B cell (primary cell): ENCODE measurements at regions of chr17 and their contacts with region 1.

Region 1: GRCh38 chr17:32877164-32877764 is 340 bp upstream of the MYO1D start:
- DNase-seq: peak; percentile 96
- ATAC-seq: peak; percentile 94
- H3K4me3 ChIP-seq: peak overlapping the region in 4 of 5 experiments; percentile 36 to 85 (median 75)
- H3K4me3 Mint-ChIP-seq: peak overlapping the region; percentile 85
- H3K27ac ChIP-seq: peak overlapping the region; percentile 70 to 77
- H3K27ac Mint-ChIP-seq: peak overlapping the region; percentile 90
- H3K4me1 ChIP-seq: peaks cover 12 to 19% of the 10 kb centered on the region in 2 donors
- H3K4me1 Mint-ChIP-seq: peaks cover 20% of the 10 kb centered on the region
- H3K27me3 ChIP-seq: no peaks in the 10 kb centered on the region
- H3K27me3 Mint-ChIP-seq: peaks cover 4% of the 10 kb centered on the region
- CTCF ChIP-seq: peak; percentile 77

Region 2: GRCh38 chr17:32444308-32445073 is 432.8 kb before region 1 on chr17 and contains the start of gene PSMD11:
- CTCF ChIA-PET with region 1: interaction called, 3 read pairs
- POLR2A ChIA-PET with region 1: no interaction called
- intact Hi-C with region 1: loop called (anchors 5 kb)
- DNase-seq: peak; percentile 98
- ATAC-seq: peak; percentile 98
- H3K4me3 ChIP-seq: peak within 1 kb of the TSS; percentile 78 to 96 (median 95)
- H3K4me3 Mint-ChIP-seq: peak within 1 kb of the TSS; percentile 86
- H3K27ac ChIP-seq: peak within 1 kb of the TSS; percentile 48 to 89
- H3K27ac Mint-ChIP-seq: peak within 1 kb of the TSS; percentile 90
- H3K4me1 ChIP-seq: peaks cover 18 to 23% of the 10 kb centered on the region in 2 donors
- H3K4me1 Mint-ChIP-seq: peaks cover 34% of the 10 kb centered on the region
- H3K27me3 ChIP-seq: peaks cover 0 to 2% (median under 1%) of the 10 kb centered on the region in 4 experiments
- H3K27me3 Mint-ChIP-seq: no peaks in the 10 kb centered on the region
- CTCF ChIP-seq: peak; percentile 46
- total RNA-seq, gene PSMD11: 73.4 and 78.7 TPM in 2 replicates

Region 3: GRCh38 chr17:32828822-32829221 is 48.4 kb before region 1 on chr17:
- CTCF ChIA-PET with region 1: interaction called, 33 read pairs
- POLR2A ChIA-PET with region 1: interaction called, 4 read pairs
- intact Hi-C with region 1: loop called (anchors 1 kb)
- DNase-seq: no peak
- ATAC-seq: no peak
- H3K4me3 ChIP-seq: no peak overlapping the region
- H3K4me3 Mint-ChIP-seq: peak overlapping the region; percentile 65
- H3K27ac ChIP-seq: peak overlapping the region in 1 of 2 donors; percentile 54
- H3K27ac Mint-ChIP-seq: peak overlapping the region; percentile 72
- H3K4me1 ChIP-seq: peaks cover 15 to 27% of the 10 kb centered on the region in 2 donors
- H3K4me1 Mint-ChIP-seq: peaks cover 44% of the 10 kb centered on the region
- H3K27me3 ChIP-seq: no peaks in the 10 kb centered on the region
- H3K27me3 Mint-ChIP-seq: no peaks in the 10 kb centered on the region
- CTCF ChIP-seq: no peak

Region 4: GRCh38 chr17:32896647-32897258 is 19.5 kb after region 1 on chr17:
- CTCF ChIA-PET with region 1: interaction called, 10 read pairs
- POLR2A ChIA-PET with region 1: no interaction called
- intact Hi-C with region 1: no loop called
- DNase-seq: no peak
- ATAC-seq: no peak
- H3K4me3 ChIP-seq: no peak overlapping the region
- H3K4me3 Mint-ChIP-seq: no peak overlapping the region
- H3K27ac ChIP-seq: no peak overlapping the region
- H3K27ac Mint-ChIP-seq: no peak overlapping the region
- H3K4me1 ChIP-seq: no peaks in the 10 kb centered on the region
- H3K4me1 Mint-ChIP-seq: no peaks in the 10 kb centered on the region
- H3K27me3 ChIP-seq: peaks cover 0 to 3% (median 2%) of the 10 kb centered on the region in 4 experiments
- H3K27me3 Mint-ChIP-seq: peaks cover 7% of the 10 kb centered on the region
- CTCF ChIP-seq: no peak

Region 5: GRCh38 chr17:32936894-32937500 is 59.7 kb after region 1 on chr17:
- CTCF ChIA-PET with region 1: interaction called, 14 read pairs
- POLR2A ChIA-PET with region 1: no interaction called
- intact Hi-C with region 1: loop called (anchors 1 kb)
- DNase-seq: peak; percentile 67
- ATAC-seq: no peak
- H3K4me3 ChIP-seq: no peak overlapping the region
- H3K4me3 Mint-ChIP-seq: peak overlapping the region; percentile 39
- H3K27ac ChIP-seq: no peak overlapping the region
- H3K27ac Mint-ChIP-seq: no peak overlapping the region
- H3K4me1 ChIP-seq: peaks cover 3 to 7% of the 10 kb centered on the region in 2 donors
- H3K4me1 Mint-ChIP-seq: peaks cover 3% of the 10 kb centered on the region
- H3K27me3 ChIP-seq: peaks cover 0 to 33% (median 9%) of the 10 kb centered on the region in 4 experiments
- H3K27me3 Mint-ChIP-seq: peaks cover 38% of the 10 kb centered on the region
- CTCF ChIP-seq: peak; percentile 77